ENCODE measurements at regions of chr3 and their contacts with region 1.

Region 1: DNA sequence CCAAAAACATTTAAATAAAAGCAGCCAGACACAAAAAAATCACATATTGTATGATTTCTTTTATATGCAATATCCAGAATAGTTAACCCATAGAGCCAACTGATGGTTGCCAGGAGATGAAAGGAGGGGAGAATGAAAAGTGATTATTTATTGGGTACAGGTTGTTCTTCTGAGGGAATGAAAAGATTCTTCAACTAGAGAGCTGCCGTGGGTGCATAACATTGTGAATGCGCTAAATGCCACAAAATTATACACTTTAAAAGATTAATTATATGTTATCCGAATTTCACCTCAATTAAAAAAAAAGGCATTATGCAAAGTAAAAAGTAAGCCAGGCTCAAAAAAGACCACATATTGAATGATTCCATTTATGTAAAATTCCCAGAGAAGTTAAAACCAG is 36.1 kb downstream of the PRKAR2A start:
- DNase-seq: no peak
- H3K4me3 ChIP-seq: no peak overlapping the region
- H3K4me3 Mint-ChIP-seq: no peak overlapping the region
- H3K27ac ChIP-seq: peak overlapping the region in 1 of 2 donors; percentile 76
- H3K27ac Mint-ChIP-seq: peak overlapping the region; percentile 86 to 93 (median 89)
- H3K4me1 ChIP-seq: peaks cover 19 to 37% of the 10 kb centered on the region in 2 donors
- H3K4me1 Mint-ChIP-seq: peaks cover 28% of the 10 kb centered on the region
- H3K27me3 ChIP-seq: no peaks in the 10 kb centered on the region
- H3K27me3 Mint-ChIP-seq: peaks cover 0 to 2% (median 0%) of the 10 kb centered on the region in 3 donors
- CTCF ChIP-seq: no peak

Region 2: DNA sequence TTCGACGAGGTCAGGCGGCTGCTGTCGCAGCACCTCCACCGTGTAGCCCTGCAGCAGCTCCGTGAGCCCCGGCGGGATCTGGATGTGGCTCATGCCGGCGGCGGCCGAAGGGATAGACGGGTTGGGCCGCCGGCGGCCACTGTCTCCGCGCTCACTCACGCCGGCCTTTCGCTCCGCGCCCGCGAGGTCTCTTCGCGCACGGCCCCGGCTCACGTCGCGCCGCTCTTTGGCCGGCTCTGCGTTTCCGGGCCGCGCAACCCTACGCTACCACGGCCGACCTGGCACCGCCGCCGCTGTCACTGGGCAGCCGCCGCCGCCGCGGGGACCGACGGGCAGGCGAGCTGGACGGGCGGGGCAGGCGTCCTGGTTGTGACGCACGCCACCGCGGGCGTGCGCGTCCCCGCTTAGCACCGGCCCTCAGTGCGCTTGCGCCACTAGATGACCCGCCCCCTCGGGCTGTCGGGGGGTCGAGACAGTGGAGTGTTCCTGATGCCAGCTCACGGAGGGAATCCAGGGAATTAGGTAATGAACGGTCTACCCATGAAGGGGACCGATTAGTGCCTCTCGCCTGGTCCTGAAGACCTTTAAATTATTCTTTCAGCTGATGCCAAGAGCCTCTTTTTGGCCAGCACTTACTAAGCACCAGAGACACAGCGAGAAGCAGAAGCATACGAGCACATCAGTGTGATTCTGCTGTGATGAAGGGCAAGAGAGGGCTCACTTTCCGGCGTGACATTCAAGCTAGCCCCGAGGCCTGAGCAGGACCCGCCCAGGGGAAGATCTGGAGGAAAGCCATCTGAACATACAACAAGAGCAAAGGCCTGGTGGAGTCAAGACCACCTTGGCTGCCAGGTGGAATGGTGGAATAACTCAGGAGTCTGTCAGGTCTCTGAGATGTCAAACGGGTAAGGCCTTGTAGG is 36.2 kb after region 1 on chr3 and contains the start of gene PRKAR2A:
- intact Hi-C with region 1: loop called (anchors 5 kb)
- DNase-seq: peak; percentile 86 to 91 (median 88)
- H3K4me3 ChIP-seq: peak within 1 kb of the TSS; percentile 84 to 94 (median 89)
- H3K4me3 Mint-ChIP-seq: peak within 1 kb of the TSS; percentile 88 to 93
- H3K27ac ChIP-seq: peak within 1 kb of the TSS; percentile 87 to 89
- H3K27ac Mint-ChIP-seq: peak within 1 kb of the TSS; percentile 88 to 98 (median 96)
- H3K4me1 ChIP-seq: peaks cover 21 to 27% of the 10 kb centered on the region in 2 donors
- H3K4me1 Mint-ChIP-seq: peaks cover 29% of the 10 kb centered on the region
- H3K27me3 ChIP-seq: no peaks in the 10 kb centered on the region
- H3K27me3 Mint-ChIP-seq: peaks cover 0 to 2% (median 1%) of the 10 kb centered on the region in 3 donors
- CTCF ChIP-seq: no peak
- polyA plus RNA-seq, gene PRKAR2A: 7.5 to 13.0 (median 12.3) TPM

Region 3: GRCh38 chr3:49076646-49077045 is 265.1 kb after region 1 on chr3:
- intact Hi-C with region 1: no loop called
- DNase-seq: no peak
- H3K4me3 ChIP-seq: no peak overlapping the region
- H3K4me3 Mint-ChIP-seq: no peak overlapping the region
- H3K27ac ChIP-seq: no peak overlapping the region
- H3K27ac Mint-ChIP-seq: peak overlapping the region in 1 of 7 donors; percentile 55
- H3K4me1 ChIP-seq: no peaks in the 10 kb centered on the region
- H3K4me1 Mint-ChIP-seq: no peaks in the 10 kb centered on the region
- H3K27me3 ChIP-seq: no peaks in the 10 kb centered on the region
- H3K27me3 Mint-ChIP-seq: no peaks in the 10 kb centered on the region
- CTCF ChIP-seq: no peak